KBM-7 (cell line): ENCODE measurements at regions of chr1 and their contacts with region 1.

Region 1: GRCh38 chr1:21176586-21177555 is at the start of gene EIF4G3:
- DNase-seq: peak; percentile 98

Region 2: DNA sequence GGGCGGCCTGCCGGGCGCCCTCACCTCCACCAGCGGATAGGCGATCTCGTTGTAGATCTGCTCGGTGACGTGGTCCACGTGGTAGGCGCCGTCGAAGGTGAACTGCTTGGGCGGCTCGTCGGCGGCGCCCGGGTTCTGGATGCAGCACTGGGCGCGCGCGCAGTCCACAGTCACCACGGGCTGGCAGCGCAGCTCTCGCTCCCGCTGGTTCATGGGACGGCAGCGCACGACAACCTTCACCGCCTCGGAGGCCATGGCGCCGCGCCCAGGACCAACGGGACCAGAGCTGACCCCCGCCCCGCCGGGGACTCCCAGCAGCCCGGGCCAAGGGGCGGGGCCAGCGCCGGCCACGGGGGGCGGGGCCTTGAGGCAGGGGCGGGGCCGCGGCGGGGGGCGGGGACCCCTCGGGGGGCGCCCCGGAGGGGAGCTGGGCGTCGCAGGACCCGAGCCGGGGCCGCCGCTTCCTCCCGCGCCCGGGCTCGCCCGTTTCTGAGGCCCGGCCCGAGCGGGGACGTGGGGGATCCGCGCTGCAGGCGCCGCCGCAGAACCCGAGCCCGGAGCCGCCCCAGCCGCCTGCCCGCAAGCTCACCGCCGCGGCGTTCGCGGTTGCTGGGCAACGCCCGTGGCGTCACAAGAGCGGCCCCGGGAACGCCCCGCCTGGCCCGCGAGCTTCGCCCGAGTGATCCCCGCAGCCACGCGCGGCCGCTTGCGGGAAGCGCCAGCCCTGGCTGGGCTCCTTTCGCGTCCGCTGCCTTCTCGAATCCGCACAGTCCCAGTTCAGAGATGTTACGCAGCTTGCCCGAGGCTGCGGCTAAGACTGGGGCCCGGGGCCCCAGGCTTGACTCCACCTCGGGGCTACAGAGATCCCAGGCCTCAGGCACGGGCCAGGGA is 459.2 kb before region 1 on chr1 and contains the start of gene KIF17:
- in situ Hi-C with region 1: loop called (anchors 25 kb)
- DNase-seq: peak; percentile 60

Region 3: GRCh38 chr1:21022279-21023040 is 154.4 kb before region 1 on chr1:
- in situ Hi-C with region 1: no loop called
- DNase-seq: peak; percentile 88